Gastrocnemius medialis (tissue), 4 donors: ENCODE measurements at regions of chr9 and their contacts with region 1.

Region 1: GRCh38 chr9:127802576-127803443 is at the start of gene FPGS:
- DNase-seq: peak; percentile 87 to 88
- ATAC-seq: peak; percentile 74 to 85
- H3K4me3 ChIP-seq: peak within 1 kb of the TSS; percentile 71 to 82 (median 80)
- H3K27ac ChIP-seq: peak within 1 kb of the TSS; percentile 94 to 98 (median 96)
- H3K4me1 ChIP-seq: peaks cover 23 to 41% of the 10 kb centered on the region in 2 donors
- H3K27me3 ChIP-seq: no peaks in the 10 kb centered on the region
- CTCF ChIP-seq: no peak
- POLR2A ChIP-seq: peak; percentile 80 to 86
- total RNA-seq, gene FPGS: 36.4 to 87.6 (median 47.7) TPM

Region 2: DNA sequence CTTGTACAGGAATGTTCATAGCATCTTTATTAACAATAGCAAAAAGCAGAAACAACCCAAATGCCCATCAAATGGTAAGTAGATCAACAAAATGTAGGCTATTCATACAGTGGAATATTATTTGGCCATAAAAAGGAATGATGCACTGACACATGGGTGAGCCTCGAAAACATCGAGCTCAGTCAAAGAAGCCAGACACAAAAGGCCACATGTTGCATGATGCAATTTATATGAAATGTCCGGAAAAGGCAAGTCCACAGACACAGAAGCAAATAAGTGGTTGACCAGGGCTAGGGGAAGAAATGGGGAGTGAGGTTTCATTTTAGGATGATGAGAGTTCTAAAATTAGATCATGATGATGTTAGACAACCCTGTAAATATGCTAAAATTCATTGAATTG is 422.3 kb before region 1 on chr9:
- in situ Hi-C with region 1: no loop called
- intact Hi-C with region 1: no loop called
- DNase-seq: no peak
- ATAC-seq: no peak
- H3K4me3 ChIP-seq: no peak overlapping the region
- H3K27ac ChIP-seq: no peak overlapping the region
- H3K4me1 ChIP-seq: no peaks in the 10 kb centered on the region
- H3K27me3 ChIP-seq: no peaks in the 10 kb centered on the region
- CTCF ChIP-seq: no peak
- POLR2A ChIP-seq: no peak

Region 3: DNA sequence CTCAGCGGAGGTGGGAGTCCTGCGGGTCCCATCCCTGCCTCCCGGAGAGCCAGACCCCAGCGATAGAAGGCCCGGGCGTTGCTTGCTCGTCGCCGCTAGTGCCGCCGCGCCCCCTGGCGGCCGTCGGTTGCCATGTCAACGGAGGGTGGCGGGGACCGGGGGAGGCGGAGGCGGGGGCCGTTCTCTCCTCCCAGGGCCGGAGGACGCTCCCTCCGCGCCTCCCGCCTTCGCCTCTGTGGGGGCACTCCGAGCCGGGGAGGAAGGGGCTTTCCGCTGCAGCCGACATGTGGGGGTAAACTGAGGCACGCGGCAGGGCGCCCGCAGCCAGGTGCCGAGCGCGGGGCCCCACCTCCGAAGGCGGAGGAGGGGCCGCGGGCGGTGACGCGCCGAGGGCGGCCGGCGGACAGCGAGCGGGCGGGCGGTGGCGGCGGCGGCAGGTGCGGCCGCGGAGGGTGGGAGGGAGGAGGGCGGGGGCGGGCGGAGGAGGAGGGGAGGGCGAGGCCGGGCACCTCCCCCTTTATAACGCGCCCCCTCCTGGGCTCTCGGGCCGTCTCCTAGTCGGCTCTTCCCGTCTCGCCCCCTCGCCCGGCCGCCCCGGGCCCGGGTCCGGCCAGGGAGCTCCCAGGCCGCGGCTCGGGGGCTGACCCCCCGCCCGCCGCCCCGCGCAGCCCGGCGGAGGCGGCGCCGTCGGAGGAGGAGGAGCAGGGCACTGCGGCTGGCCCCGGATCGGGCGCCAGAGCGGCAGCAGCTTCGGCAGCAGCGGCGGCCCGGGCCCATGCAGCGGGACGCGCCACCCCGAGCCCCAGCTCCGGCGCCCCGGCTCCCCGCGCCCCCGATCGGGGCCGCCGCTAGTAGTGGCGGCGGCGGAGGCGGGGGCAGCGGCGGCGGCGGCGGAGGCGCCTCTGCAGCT is 17.5 kb before region 1 on chr9:
- in situ Hi-C with region 1: no loop called
- intact Hi-C with region 1: loop called (anchors 1 kb)
- DNase-seq: peak; percentile 73 to 84
- ATAC-seq: peak; percentile 80
- H3K4me3 ChIP-seq: peak overlapping the region; percentile 59 to 100 (median 92)
- H3K27ac ChIP-seq: peak overlapping the region; percentile 89 to 98 (median 96)
- H3K4me1 ChIP-seq: peaks cover 7 to 12% of the 10 kb centered on the region in 2 donors
- H3K27me3 ChIP-seq: no peaks in the 10 kb centered on the region
- CTCF ChIP-seq: peak; percentile 79 to 99 (median 99)
- POLR2A ChIP-seq: no peak

Region 4: DNA sequence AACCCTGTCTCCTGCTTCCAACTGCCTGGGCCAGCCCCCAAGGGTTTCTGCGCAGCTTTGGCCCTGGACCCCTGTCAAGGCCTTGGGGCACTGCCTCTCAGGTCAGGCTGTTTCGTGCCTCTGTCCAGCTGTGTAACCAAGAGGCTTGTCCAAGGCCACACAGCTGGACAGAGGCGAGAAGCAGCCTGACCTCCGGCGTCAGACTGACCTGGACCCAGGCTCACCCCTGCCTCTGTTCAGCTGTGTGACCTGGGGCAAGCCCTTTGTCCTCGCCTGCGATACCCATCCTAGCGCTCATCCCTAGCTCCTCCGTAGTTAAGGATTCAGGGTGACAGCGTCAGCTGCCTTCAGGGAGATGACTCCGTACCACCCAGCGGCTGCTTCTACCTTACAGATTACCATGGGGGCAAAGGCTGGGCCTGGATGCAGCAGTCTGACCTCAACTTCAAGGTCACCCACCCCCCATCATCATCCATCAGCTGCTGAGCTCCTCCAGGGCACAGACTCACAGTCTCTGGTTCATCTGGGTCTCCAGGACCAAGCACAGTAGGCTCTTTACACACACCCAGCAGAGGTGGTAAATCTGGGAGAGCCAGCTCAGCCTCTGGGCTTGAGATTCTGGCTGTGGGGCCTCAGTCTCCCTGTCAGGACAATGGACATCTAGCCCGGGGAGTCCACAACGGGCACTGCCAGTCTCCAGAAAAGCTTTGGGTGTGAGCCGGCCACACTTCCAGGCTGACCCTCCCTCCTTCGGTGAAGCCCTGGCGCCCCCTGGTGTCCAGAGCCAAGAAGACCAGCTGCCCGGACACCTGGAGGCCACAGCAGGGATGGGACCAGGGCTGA is 66.7 kb after region 1 on chr9:
- in situ Hi-C with region 1: loop called in 1 of 4 experiments (anchors 10 kb)
- intact Hi-C with region 1: no loop called
- DNase-seq: peak; percentile 78 to 85
- ATAC-seq: peak; percentile 66 to 72
- H3K4me3 ChIP-seq: no peak overlapping the region
- H3K27ac ChIP-seq: peak overlapping the region; percentile 34 to 77 (median 69)
- H3K4me1 ChIP-seq: peaks cover 15 to 23% of the 10 kb centered on the region in 2 donors
- H3K27me3 ChIP-seq: no peaks in the 10 kb centered on the region
- CTCF ChIP-seq: peak; percentile 83 to 92 (median 91)
- POLR2A ChIP-seq: no peak

Region 5: DNA sequence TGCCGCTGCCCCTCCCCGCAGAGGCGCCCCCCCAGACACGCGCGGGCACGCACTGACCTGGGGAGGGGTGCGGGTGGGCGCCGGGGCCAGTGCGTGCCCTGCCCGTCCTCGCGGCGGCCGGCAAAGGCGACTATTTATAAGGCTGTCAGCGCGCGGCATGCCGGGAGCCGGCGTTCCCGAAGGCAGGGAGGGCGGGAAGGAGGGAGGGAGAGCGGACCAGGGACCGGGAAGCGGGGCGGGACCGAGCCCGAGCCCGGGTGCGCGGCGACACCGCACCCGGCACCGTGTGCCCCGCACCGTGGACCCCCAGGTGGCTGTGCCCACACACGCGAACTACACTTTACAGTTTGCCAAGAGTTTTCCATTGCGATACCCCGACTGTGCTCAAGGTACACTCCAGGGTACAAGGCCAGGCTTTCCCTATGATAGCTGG is 74.8 kb after region 1 on chr9 and contains the start of gene AK1:
- in situ Hi-C with region 1: no loop called
- intact Hi-C with region 1: loop called (anchors 2 kb)
- DNase-seq: peak; percentile 75 to 83
- ATAC-seq: peak; percentile 68 to 70
- H3K4me3 ChIP-seq: peak within 1 kb of the TSS; percentile 60 to 74 (median 68)
- H3K27ac ChIP-seq: peak within 1 kb of the TSS; percentile 86 to 96 (median 91)
- H3K4me1 ChIP-seq: peaks cover 47 to 48% of the 10 kb centered on the region in 2 donors
- H3K27me3 ChIP-seq: no peaks in the 10 kb centered on the region
- CTCF ChIP-seq: no peak
- POLR2A ChIP-seq: peak; percentile 74 to 90
- total RNA-seq, gene AK1: 240 to 489 (median 359) TPM

Region 6: GRCh38 chr9:128043467-128043868 is 240.7 kb after region 1 on chr9:
- in situ Hi-C with region 1: no loop called
- intact Hi-C with region 1: no loop called
- DNase-seq: peak in 1 of 2 donors; percentile 33
- ATAC-seq: peak; percentile 46 to 68
- H3K4me3 ChIP-seq: no peak overlapping the region
- H3K27ac ChIP-seq: peak overlapping the region; percentile 19 to 46 (median 33)
- H3K4me1 ChIP-seq: peaks cover 7 to 8% of the 10 kb centered on the region in 2 donors
- H3K27me3 ChIP-seq: no peaks in the 10 kb centered on the region
- CTCF ChIP-seq: no peak
- POLR2A ChIP-seq: no peak

Region 7: DNA sequence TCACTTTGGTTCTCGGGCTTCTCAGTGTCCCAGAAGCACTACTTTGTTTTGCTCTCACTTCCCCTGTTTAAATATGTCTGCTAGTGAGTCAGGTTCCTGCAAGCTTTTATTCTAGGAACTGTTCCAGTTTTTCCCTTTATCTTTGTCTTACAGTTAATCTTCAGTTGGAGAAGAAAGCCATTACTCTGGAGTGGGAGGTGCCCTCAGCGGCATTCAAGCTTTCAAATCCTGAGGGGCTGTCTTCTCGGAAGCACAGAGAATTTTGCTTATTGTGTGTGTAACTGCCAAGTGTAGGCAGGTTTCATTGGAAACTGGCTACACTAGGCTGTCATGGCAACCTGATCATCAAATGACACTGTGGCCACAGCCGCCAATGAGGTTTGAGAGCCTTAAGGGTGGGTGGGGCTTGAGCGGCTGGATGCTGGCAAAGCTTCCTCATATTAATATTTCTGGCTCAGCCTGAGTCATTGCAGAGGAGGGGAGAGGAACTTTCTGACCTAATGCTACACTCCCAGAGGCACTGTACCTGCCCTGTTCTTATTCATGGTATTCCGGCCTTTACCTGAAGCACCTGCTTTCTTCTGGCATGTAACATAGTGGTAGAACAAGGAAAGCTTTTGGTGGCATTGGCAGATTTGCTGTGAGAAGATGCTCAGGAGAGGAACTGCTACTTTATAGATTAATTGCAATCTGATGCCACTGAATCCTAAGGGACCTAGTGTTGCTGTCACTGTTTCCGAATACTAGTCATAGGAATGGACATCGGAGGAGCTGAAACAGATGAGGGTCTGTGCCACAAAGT is 291.6 kb after region 1 on chr9:
- in situ Hi-C with region 1: no loop called
- intact Hi-C with region 1: loop called (anchors 10 kb)
- DNase-seq: peak; percentile 88 to 94
- ATAC-seq: peak; percentile 70 to 76
- H3K4me3 ChIP-seq: peak overlapping the region; percentile 6 to 33 (median 27)
- H3K27ac ChIP-seq: peak overlapping the region; percentile 72 to 83 (median 81)
- H3K4me1 ChIP-seq: peaks cover 57 to 59% of the 10 kb centered on the region in 2 donors
- H3K27me3 ChIP-seq: no peaks in the 10 kb centered on the region
- CTCF ChIP-seq: no peak
- POLR2A ChIP-seq: peak in 1 of 2 donors; percentile 87

Region 8: DNA sequence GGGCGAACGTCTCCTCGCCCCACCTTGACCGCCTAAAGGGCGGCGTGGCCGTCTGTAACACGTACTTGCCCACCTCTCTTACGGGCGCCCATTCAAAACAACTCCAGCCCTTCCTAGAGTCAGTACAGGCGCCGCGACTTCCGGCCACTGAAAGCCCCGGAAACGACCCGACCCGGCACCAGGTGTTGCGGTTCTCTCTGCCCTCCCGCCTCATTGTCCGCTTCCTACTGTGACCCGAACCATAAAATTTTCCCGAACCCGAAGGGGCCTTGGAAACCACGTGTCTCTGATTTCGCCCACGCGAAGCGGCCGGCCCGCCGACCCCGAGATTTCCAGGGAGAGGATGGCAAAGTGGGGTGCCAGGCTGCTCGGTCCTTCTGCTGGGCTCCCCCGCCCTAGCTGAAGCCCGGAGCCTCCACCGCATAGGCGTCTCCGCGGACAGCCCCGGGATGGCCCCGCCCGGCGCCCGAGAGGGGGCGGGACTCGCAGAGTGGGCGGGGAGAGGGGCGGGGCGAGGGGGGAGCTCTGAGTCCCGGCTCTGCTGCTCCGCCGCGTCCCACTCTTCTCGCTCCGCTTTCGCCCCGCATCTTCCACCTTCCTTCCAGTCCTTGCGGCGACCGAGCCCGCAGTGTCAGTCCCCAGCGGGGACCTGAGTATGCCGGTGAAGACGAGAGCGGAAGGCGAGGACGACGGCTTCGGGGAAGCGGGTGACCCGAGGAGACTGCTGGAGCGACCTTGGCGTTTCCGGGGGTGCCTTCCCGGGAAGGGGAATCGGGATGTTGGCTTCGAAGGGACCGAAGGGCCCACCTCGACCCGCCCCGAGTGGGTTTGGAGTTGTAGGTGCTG is 325.4 kb after region 1 on chr9:
- in situ Hi-C with region 1: no loop called
- intact Hi-C with region 1: no loop called
- DNase-seq: peak; percentile 71 to 79
- ATAC-seq: peak; percentile 93 to 95
- H3K4me3 ChIP-seq: peak overlapping the region; percentile 72 to 99 (median 98)
- H3K27ac ChIP-seq: peak overlapping the region; percentile 97 to 100 (median 98)
- H3K4me1 ChIP-seq: peaks cover 23 to 30% of the 10 kb centered on the region in 2 donors
- H3K27me3 ChIP-seq: no peaks in the 10 kb centered on the region
- CTCF ChIP-seq: no peak
- POLR2A ChIP-seq: peak; percentile 27 to 64